ENCODE measurements at regions of chr3 and their contacts with region 1.

Region 1: GRCh38 chr3:85950435-85950834 is 991.6 kb downstream of the CADM2 start:
- DNase-seq: no peak
- ATAC-seq: no peak
- H3K4me3 ChIP-seq: no peak overlapping the region
- H3K4me3 Mint-ChIP-seq: no peak overlapping the region
- H3K27ac ChIP-seq: no peak overlapping the region
- H3K27ac Mint-ChIP-seq: no peak overlapping the region
- H3K4me1 ChIP-seq: no peaks in the 10 kb centered on the region
- H3K4me1 Mint-ChIP-seq: no peaks in the 10 kb centered on the region
- H3K27me3 ChIP-seq: no peaks in the 10 kb centered on the region
- H3K27me3 Mint-ChIP-seq: no peaks in the 10 kb centered on the region
- CTCF ChIP-seq: no peak

Region 2: GRCh38 chr3:85933326-85933725 is 17.1 kb before region 1 on chr3:
- CTCF ChIA-PET with region 1: no interaction called
- POLR2A ChIA-PET with region 1: no interaction called
- intact Hi-C with region 1: loop called in 1 of 2 experiments (anchors 1 kb)
- DNase-seq: no peak
- ATAC-seq: no peak
- H3K4me3 ChIP-seq: no peak overlapping the region
- H3K4me3 Mint-ChIP-seq: no peak overlapping the region
- H3K27ac ChIP-seq: no peak overlapping the region
- H3K27ac Mint-ChIP-seq: no peak overlapping the region
- H3K4me1 ChIP-seq: no peaks in the 10 kb centered on the region
- H3K4me1 Mint-ChIP-seq: no peaks in the 10 kb centered on the region
- H3K27me3 ChIP-seq: no peaks in the 10 kb centered on the region
- H3K27me3 Mint-ChIP-seq: no peaks in the 10 kb centered on the region
- CTCF ChIP-seq: no peak

Region 3: DNA sequence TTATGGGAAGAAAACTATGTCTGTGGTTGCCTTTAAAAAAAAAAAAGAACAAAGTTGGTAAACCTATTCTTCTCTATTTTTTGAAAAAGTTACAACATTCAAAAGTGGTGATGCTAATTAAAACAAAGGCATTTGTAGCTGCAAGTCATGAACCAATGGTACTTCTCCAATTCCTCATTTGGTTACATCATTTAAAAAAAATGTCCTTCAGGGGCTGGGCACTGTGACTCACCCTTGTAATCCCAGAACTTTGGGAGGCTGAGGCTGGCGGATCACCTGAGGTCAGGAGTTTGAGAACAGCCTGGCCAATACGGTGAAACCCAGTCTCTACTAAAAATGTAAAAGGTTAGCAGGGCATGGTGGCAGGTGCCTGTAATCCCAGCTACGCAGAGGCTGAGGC is 465.9 kb after region 1 on chr3:
- CTCF ChIA-PET with region 1: no interaction called
- POLR2A ChIA-PET with region 1: no interaction called
- intact Hi-C with region 1: no loop called
- DNase-seq: no peak
- ATAC-seq: no peak
- H3K4me3 ChIP-seq: no peak overlapping the region
- H3K4me3 Mint-ChIP-seq: no peak overlapping the region
- H3K27ac ChIP-seq: no peak overlapping the region
- H3K27ac Mint-ChIP-seq: no peak overlapping the region
- H3K4me1 ChIP-seq: no peaks in the 10 kb centered on the region
- H3K4me1 Mint-ChIP-seq: no peaks in the 10 kb centered on the region
- H3K27me3 ChIP-seq: no peaks in the 10 kb centered on the region
- H3K27me3 Mint-ChIP-seq: no peaks in the 10 kb centered on the region
- CTCF ChIP-seq: no peak